ENCODE measurements at regions of chr1 and their contacts with region 1.

Region 1: DNA sequence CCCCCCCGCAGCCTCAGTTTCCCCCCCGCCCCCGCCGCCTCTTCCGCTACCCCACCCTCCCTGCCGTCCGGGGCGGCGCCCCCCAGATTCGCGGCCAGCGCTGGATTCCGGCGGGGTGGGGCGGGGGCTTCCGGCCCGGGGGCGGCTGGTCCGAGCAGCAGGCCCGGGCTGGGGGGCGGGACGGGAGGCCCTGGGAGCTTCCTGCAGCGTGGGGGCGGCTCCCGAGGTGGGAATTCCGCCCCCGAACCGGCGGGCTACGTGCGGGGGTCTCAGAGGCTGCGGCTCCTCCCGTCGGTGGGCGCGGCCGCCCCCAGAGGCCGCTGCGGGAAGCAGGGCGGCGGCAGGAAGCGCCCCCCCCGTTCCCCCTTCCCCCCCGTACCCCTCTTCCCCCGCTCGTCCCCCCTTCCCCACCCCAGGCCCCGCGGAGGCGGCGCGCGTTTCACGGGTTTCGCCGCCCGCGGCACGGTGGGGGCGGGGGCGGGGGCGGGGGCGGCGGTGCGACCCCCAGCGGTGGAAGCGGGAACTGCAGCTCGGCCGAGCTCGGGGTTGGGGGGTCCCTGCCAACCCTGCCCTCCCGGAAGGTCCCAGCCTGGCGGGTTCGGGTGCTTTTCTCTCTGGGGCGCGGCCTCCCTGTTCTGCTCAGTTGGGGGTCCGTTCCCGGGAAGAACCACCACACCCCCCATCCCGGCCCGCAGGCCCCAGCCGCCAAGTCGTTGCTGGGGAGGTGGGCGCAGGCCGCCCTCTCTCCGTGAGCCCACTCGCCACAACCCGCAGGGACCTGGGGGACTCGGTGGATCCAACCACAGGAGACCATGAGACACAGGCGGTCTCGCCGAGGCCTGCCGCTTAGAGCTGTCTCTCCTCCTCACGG is 76.3 kb downstream of the MORN1 start:
- DNase-seq: no peak
- H3K4me3 ChIP-seq: peak overlapping the region; percentile 41 to 75 (median 63)
- H3K27ac ChIP-seq: peak overlapping the region in 53 of 59 donors; percentile 1 to 96 (median 74)
- H3K27me3 ChIP-seq: no peaks in the 10 kb centered on the region
- CTCF ChIP-seq: peak; percentile 79 to 99 (median 92)

Region 2: GRCh38 chr1:2044510-2045319 is 270.3 kb before region 1 on chr1:
- intact Hi-C with region 1: no loop called
- DNase-seq: peak in 9 of 10 donors; percentile 40 to 89 (median 63)
- H3K4me3 ChIP-seq: peak overlapping the region in 57 of 59 donors; percentile 14 to 61 (median 45)
- H3K27ac ChIP-seq: peak overlapping the region in 20 of 59 donors; percentile 11 to 77 (median 56)
- H3K27me3 ChIP-seq: peaks cover 0 to 27% (median 16%) of the 10 kb centered on the region in 45 donors
- CTCF ChIP-seq: peak in 55 of 56 donors; percentile 56 to 97 (median 83)

Region 3: GRCh38 chr1:2233997-2234761 is 80.9 kb before region 1 on chr1:
- intact Hi-C with region 1: loop called (anchors 5 kb)
- DNase-seq: peak in 6 of 10 donors; percentile 50 to 81 (median 66)
- H3K4me3 ChIP-seq: peak overlapping the region; percentile 2 to 86 (median 72)
- H3K27ac ChIP-seq: peak overlapping the region in 57 of 59 donors; percentile 2 to 96 (median 84)
- H3K27me3 ChIP-seq: no peaks in the 10 kb centered on the region
- CTCF ChIP-seq: no peak

Region 4: DNA sequence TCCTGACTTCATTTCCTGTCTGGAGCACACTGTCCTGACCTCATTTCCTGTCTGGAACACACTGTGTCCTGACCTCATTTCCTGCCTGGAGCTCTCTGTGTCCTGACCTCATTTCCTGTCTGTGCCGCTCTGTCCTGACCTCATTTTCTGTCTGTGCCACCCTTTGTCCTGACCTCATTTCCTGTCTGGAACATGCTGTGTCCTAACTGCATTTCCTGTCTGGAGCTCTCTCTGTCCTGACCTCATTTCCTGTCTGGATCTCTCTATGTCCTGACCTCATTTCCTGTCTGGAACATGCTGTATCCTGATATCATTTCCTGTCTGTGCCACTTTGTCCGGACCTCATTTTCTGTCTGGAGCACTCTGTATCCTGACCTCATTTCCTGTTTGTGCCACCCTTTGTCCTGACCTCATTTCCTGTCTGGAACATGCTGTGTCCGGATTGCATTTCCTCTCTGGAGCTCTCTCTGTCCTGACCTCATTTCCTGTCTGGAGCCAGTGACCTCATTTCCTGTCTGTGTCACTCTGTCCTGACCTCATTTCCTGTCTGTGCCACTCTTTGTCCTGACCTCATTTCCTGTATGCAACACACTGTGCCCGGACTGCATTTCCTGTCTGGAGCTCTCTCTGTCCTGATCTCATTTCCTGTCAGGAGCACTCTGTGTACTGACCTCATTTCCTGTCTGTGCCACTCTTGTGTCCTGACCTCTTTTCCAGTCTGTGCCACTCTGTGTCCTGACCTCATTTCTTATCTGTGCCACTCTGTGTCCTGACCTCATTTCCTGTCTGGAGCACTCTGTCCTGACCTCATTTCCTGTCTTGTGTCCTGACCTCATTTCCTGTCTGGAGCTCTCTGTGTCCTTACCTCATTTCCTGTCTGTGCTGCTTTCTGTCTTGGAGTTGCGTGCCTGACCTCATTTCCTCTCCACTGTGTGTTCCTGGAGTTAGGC is 59.3 kb before region 1 on chr1:
- intact Hi-C with region 1: loop called in 1 of 2 experiments (anchors 5 kb)
- DNase-seq: no peak
- H3K4me3 ChIP-seq: no peak overlapping the region
- H3K27ac ChIP-seq: peak overlapping the region in 58 of 59 donors; percentile 17 to 90 (median 80)
- H3K27me3 ChIP-seq: no peaks in the 10 kb centered on the region
- CTCF ChIP-seq: no peak

Region 5: DNA sequence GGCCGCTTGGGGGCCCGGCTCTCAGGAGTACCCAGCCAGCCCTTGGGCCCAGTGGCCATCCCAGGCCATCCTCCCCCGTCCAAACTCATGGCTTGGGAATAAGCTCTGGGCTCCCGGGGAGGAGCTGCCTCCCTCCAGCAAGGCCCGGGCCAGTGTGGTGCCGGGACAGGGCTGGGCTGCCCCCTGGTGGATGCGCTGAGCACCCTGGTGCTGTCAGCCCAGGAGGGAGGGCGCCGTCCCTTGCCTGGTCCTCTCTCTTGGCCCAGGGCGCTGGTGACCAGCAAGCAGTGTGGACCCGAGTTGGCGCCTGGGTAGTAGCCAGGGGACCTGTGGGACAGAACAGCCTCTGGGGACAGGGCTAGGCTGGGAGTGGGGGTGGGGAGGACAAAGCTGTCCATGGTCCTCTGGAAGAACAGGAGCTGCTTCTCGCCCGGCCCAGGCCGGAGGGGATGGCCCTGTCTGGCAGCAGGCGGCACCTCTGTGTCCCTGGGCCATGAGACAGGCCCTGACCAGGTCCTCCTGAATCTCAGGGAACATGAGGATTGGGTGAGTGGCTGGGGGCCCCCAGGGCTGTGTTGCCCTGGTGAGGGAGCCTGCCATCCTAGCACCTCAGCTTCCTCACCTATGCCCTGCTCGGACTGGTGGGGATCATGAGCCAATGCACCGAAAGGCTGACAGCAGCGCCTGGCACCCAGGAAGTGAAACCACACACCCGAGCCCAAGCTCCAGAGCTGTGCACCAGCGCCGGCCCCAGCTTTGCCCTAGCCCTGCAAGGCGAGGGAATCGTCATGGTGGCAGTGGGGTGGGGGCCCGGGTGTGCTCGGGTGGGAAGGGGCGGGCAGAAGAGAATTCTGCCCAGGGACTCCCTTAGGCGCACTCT is 66.9 kb after region 1 on chr1:
- intact Hi-C with region 1: loop called in 1 of 2 experiments (anchors 5 kb)
- DNase-seq: peak; percentile 64 to 85 (median 72)
- H3K4me3 ChIP-seq: no peak overlapping the region
- H3K27ac ChIP-seq: peak overlapping the region in 33 of 59 donors; percentile 12 to 88 (median 39)
- H3K27me3 ChIP-seq: no peaks in the 10 kb centered on the region
- CTCF ChIP-seq: peak; percentile 54 to 94 (median 88)